ENCODE measurements at regions of chr10 and their contacts with region 1.

Region 1: GRCh38 chr10:91271886-91272285 is 51.4 kb downstream of the PCGF5 start:
- DNase-seq: peak; percentile 60
- H3K4me3 ChIP-seq: no peak overlapping the region
- CTCF ChIP-seq: no peak

Region 2: DNA sequence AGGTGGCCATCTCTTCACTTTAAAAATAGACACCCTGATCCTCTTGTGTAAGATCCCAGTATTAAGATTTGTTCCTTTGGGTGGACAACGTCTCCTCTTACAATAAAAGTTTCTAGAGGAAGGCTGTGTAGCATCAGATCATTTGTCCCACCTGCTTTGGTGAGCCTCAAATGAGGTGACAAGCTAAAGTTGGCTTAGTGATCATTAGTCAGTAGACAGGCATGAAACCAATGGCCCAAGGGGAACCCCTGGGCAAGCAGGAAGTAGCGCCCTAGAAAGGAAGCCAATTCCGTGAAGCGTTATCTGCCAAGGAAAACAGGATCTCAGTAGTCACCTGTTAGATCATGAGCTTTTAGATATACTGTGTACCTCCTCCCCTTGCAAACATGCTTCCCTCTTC is 15.4 kb after region 1 on chr10:
- CTCF ChIA-PET with region 1: interaction called, 10 read pairs
- POLR2A ChIA-PET with region 1: no interaction called
- DNase-seq: no peak
- H3K4me3 ChIP-seq: no peak overlapping the region
- CTCF ChIP-seq: no peak